ENCODE measurements at regions of chr5 and their contacts with region 1.

Region 1: DNA sequence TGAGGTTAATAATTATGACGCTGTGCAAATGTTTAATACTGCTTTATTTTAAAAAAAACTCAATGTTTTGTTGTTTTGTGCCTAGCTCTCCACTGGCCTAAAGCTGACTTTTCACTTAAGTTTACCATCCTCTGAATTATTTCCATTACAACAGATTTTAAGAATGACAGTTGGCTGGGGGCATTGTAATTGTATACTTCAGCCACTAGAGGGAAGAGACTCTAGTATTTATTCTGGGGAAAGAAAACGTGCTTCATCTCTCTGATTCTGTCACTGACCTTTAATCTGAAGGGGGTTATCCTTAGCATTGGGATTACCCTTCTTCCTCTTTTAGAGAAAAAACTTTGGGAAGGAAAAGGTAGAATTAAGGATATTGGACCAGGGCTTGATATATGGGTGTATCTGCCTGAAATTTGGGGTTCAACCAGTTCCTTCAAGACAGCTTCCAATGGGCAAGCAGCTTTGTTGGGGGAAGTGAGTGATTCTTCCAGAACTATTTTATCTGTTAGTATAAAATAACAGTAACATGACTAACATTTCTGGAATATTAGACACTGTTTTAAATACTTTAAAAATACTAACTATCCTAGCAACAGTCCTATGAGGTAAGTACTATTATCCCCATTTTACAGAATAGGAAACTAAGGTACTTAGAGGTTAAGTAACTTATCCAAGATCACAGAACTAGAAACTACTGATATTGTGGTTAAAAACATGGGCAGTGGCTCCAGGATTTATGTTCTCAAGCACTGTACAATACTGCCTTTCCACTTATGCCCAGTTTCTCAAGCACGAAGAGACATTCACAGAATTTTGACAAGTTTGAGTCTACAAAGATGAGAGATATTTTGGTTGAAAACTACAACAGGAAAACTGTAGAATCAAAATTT is 208.4 kb downstream of the CD180 start:
- DNase-seq: peak; percentile 39
- H3K4me3 ChIP-seq: no peak overlapping the region; a peak in 1 of 4 replicates
- H3K27ac ChIP-seq: no peak overlapping the region
- H3K4me1 ChIP-seq: no peaks in the 10 kb centered on the region; a peak in 2 of 4 replicates
- H3K27me3 ChIP-seq: no peaks in the 10 kb centered on the region
- CTCF ChIP-seq: peak; percentile 86
- EP300 ChIP-seq: no peak
- RAD21 ChIP-seq: peak; percentile 74

Region 2: DNA sequence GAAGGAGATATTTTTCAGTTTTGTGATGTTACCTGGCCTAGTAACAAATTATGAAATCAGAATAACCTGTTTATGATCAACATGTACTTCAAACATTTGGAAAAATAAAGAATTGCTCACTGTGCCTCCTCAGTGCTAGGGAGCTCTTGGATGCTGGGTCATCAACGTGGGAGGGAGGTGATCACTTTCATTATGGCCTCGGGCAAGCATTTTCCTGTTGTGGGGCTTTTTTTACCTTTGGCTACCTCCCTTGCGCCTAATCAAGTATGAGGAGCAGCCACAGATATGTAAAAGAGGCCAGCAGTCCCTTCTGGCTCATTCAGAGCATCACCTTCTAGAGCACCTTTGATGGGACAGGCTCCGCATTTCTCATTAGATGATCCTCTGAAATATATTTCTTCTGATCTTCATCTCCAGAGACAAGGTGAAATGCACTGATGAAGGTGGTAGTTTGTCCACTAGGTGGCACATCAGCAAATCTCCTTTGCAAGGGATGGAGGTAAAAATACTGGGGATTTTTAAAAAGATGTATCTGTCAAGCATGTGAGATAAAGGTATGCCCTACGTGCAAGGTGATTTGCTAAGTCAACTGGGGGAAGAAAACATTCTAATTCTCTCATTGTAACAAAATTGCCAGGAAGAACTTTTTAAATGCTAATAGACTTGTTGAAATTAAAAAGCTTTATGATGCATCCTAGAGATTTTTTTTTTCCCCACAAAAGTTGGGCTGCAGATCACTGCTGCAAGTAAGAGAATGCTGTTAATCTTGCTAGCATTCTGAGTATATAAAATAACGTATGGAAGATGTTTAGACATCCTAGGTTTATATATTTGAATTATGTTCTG is 173.8 kb before region 1 on chr5:
- CTCF ChIA-PET with region 1: interaction called, 16 read pairs
- POLR2A ChIA-PET with region 1: no interaction called
- DNase-seq: peak; percentile 66
- H3K4me3 ChIP-seq: no peak overlapping the region; a peak in 1 of 4 replicates
- H3K27ac ChIP-seq: no peak overlapping the region
- H3K4me1 ChIP-seq: no peaks in the 10 kb centered on the region; a peak in 1 of 4 replicates
- H3K27me3 ChIP-seq: peaks cover 6% of the 10 kb centered on the region; the same call in 1 of the 2 replicates
- CTCF ChIP-seq: peak; percentile 81
- EP300 ChIP-seq: no peak
- RAD21 ChIP-seq: peak; percentile 76

Region 3: DNA sequence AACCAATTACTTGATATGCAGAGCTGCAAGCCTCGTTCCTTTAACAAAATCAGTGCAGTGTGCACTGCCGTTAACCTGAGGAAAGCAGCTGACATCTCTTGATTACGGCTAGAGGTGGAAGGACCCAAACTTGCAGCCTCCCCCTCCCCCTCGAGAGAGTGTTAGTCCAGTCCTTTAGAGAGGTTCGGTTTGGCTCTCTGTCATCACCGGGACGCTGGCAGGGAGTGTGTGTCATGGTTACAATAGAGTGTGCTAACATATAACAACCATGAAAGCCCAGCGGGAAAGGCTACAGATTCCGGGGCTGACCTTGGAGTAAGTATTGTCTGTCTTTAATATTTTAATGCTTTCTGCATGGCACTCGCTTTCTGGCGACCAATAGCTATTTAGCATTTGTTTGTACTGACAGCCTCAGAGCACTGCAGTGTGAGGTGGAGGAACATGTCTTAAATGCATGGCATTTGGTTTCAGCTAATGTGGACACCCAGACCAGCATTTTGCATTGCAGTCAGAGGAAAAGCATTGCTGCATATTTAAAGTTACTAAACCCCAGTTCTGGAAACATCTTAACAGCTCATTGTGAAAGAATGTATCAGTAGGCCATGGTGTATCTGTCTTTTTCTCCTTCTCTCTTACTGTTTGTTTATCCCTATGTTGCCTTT is 29.1 kb before region 1 on chr5:
- CTCF ChIA-PET with region 1: interaction called, 10 read pairs
- POLR2A ChIA-PET with region 1: no interaction called
- DNase-seq: no peak
- H3K4me3 ChIP-seq: no peak overlapping the region
- H3K27ac ChIP-seq: peak overlapping the region; percentile 12 to 53; a peak in 3 of 4 replicates
- H3K4me1 ChIP-seq: peaks cover 13 to 28% of the 10 kb centered on the region in 2 experiments; a peak in 3 of 4 replicates
- H3K27me3 ChIP-seq: no peaks in the 10 kb centered on the region
- CTCF ChIP-seq: no peak
- EP300 ChIP-seq: no peak
- RAD21 ChIP-seq: no peak

Region 4: GRCh38 chr5:67003935-67004729 is 15.9 kb after region 1 on chr5:
- CTCF ChIA-PET with region 1: interaction called, 16 read pairs
- POLR2A ChIA-PET with region 1: interaction called, 3 read pairs
- DNase-seq: peak; percentile 90
- H3K4me3 ChIP-seq: peak overlapping the region; percentile 60 to 61
- H3K27ac ChIP-seq: peak overlapping the region; percentile 53 to 96
- H3K4me1 ChIP-seq: peaks cover 7 to 22% of the 10 kb centered on the region in 2 experiments; a peak in 3 of 4 replicates
- H3K27me3 ChIP-seq: no peaks in the 10 kb centered on the region
- CTCF ChIP-seq: no peak
- EP300 ChIP-seq: no peak
- RAD21 ChIP-seq: peak; percentile 37

Region 5: DNA sequence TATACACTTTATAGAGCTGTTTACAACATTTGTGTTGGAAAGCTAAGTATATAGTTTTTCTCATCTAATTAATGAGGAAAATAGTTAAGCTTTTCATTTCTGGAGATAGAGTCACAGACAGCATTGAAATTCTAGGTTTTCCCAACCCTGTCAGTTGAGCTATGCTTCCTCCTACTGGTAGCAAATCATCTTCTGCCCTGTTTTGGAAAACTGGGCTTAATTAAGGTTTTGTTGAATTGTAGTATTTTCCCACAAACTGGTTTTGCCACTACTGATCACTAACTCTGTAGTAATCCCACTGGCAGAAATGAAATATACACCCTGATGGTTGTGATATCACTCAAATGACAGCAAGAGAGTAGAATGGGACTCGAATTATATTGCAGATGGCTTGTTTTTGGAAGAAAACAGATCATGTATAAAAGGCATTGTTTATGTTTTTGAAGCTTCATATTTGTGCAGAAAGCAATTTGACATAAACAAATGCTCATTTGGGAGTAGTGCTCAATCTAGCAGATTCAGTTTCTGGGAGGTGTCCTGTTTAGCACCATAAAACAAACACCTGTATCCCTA is 161.8 kb after region 1 on chr5:
- CTCF ChIA-PET with region 1: interaction called, 52 read pairs
- POLR2A ChIA-PET with region 1: no interaction called
- DNase-seq: peak; percentile 43
- H3K4me3 ChIP-seq: no peak overlapping the region
- H3K27ac ChIP-seq: no peak overlapping the region
- H3K4me1 ChIP-seq: no peaks in the 10 kb centered on the region
- H3K27me3 ChIP-seq: no peaks in the 10 kb centered on the region
- CTCF ChIP-seq: peak; percentile 73
- EP300 ChIP-seq: no peak
- RAD21 ChIP-seq: peak; percentile 87

Region 6: GRCh38 chr5:67156976-67157583 is 168.9 kb after region 1 on chr5:
- CTCF ChIA-PET with region 1: interaction called, 19 read pairs
- POLR2A ChIA-PET with region 1: no interaction called
- DNase-seq: peak; percentile 57
- H3K4me3 ChIP-seq: no peak overlapping the region; a peak in 1 of 4 replicates
- H3K27ac ChIP-seq: peak overlapping the region in 1 of 2 experiments; percentile 50; a peak in 2 of 4 replicates
- H3K4me1 ChIP-seq: peaks cover 11 to 14% of the 10 kb centered on the region in 2 experiments; a peak in 2 of 4 replicates
- H3K27me3 ChIP-seq: no peaks in the 10 kb centered on the region
- CTCF ChIP-seq: peak; percentile 89
- EP300 ChIP-seq: peak in 1 of 2 experiments; percentile 26; a peak in 1 of 4 replicates
- RAD21 ChIP-seq: peak; percentile 78

Region 7: GRCh38 chr5:67178085-67178484 is 189.9 kb after region 1 on chr5:
- CTCF ChIA-PET with region 1: no interaction called
- POLR2A ChIA-PET with region 1: no interaction called
- DNase-seq: peak; percentile 30
- H3K4me3 ChIP-seq: no peak overlapping the region
- H3K27ac ChIP-seq: no peak overlapping the region
- H3K4me1 ChIP-seq: no peaks in the 10 kb centered on the region; a peak in 2 of 4 replicates
- H3K27me3 ChIP-seq: no peaks in the 10 kb centered on the region
- CTCF ChIP-seq: no peak
- EP300 ChIP-seq: peak in 1 of 2 experiments; percentile 45; a peak in 1 of 4 replicates
- RAD21 ChIP-seq: no peak; the same call in 1 of the 2 replicates

Region 8: GRCh38 chr5:67209142-67209771 is 221.1 kb after region 1 on chr5:
- CTCF ChIA-PET with region 1: interaction called, 23 read pairs
- POLR2A ChIA-PET with region 1: no interaction called
- DNase-seq: peak; percentile 79
- H3K4me3 ChIP-seq: no peak overlapping the region; a peak in 1 of 4 replicates
- H3K27ac ChIP-seq: no peak overlapping the region
- H3K4me1 ChIP-seq: peaks cover 0 to 10% of the 10 kb centered on the region in 2 experiments; a peak in 2 of 4 replicates
- H3K27me3 ChIP-seq: no peaks in the 10 kb centered on the region
- CTCF ChIP-seq: peak; percentile 73
- EP300 ChIP-seq: 0 out of 4 replicates have a peak, but pooled peaks of 1 of the 2 experiments have one; percentile 19
- RAD21 ChIP-seq: peak; percentile 95